CD4-positive, alpha-beta T cell (primary cell): ENCODE measurements at regions of chr22 and their contacts with region 1.

Region 1: GRCh38 chr22:38201710-38202436 is at the start of gene MAFF:
- DNase-seq: peak; percentile 65 to 96 (median 80)
- ATAC-seq: peak; percentile 74
- H3K4me3 ChIP-seq: peak within 1 kb of the TSS; percentile 83
- H3K4me3 Mint-ChIP-seq: peak within 1 kb of the TSS; percentile 90
- H3K27ac ChIP-seq: peak within 1 kb of the TSS; percentile 82
- H3K27ac Mint-ChIP-seq: peak within 1 kb of the TSS; percentile 87
- H3K4me1 ChIP-seq: peaks cover 37% of the 10 kb centered on the region
- H3K4me1 Mint-ChIP-seq: peaks cover 26% of the 10 kb centered on the region
- H3K27me3 ChIP-seq: no peaks in the 10 kb centered on the region
- H3K27me3 Mint-ChIP-seq: no peaks in the 10 kb centered on the region
- CTCF ChIP-seq: no peak
- total RNA-seq, gene MAFF: 25.6 to 27.3 TPM

Region 2: GRCh38 chr22:38214256-38215056 is 12.6 kb after region 1 on chr22:
- CTCF ChIA-PET with region 1: no interaction called
- POLR2A ChIA-PET with region 1: interaction called, 24 read pairs
- intact Hi-C with region 1: no loop called
- DNase-seq: peak; percentile 51 to 90 (median 72)
- ATAC-seq: peak; percentile 82
- H3K4me3 ChIP-seq: peak overlapping the region; percentile 51
- H3K4me3 Mint-ChIP-seq: peak overlapping the region; percentile 45
- H3K27ac ChIP-seq: no peak overlapping the region
- H3K27ac Mint-ChIP-seq: peak overlapping the region; percentile 55
- H3K4me1 ChIP-seq: peaks cover 34% of the 10 kb centered on the region
- H3K4me1 Mint-ChIP-seq: peaks cover 29% of the 10 kb centered on the region
- H3K27me3 ChIP-seq: no peaks in the 10 kb centered on the region
- H3K27me3 Mint-ChIP-seq: no peaks in the 10 kb centered on the region
- CTCF ChIP-seq: no peak

Region 3: GRCh38 chr22:38262051-38262795 is 60.4 kb after region 1 on chr22:
- CTCF ChIA-PET with region 1: no interaction called
- POLR2A ChIA-PET with region 1: interaction called, 5 read pairs
- intact Hi-C with region 1: loop called in 1 of 2 experiments (anchors 10 kb)
- DNase-seq: peak; percentile 17 to 65 (median 33)
- ATAC-seq: no peak
- H3K4me3 ChIP-seq: no peak overlapping the region
- H3K4me3 Mint-ChIP-seq: no peak overlapping the region
- H3K27ac ChIP-seq: no peak overlapping the region
- H3K27ac Mint-ChIP-seq: peak overlapping the region; percentile 51
- H3K4me1 ChIP-seq: peaks cover 58% of the 10 kb centered on the region
- H3K4me1 Mint-ChIP-seq: peaks cover 61% of the 10 kb centered on the region
- H3K27me3 ChIP-seq: no peaks in the 10 kb centered on the region
- H3K27me3 Mint-ChIP-seq: no peaks in the 10 kb centered on the region
- CTCF ChIP-seq: peak; percentile 48

Region 4: GRCh38 chr22:38272373-38273134 is 70.7 kb after region 1 on chr22 and contains the start of gene TMEM184B:
- CTCF ChIA-PET with region 1: no interaction called
- POLR2A ChIA-PET with region 1: interaction called, 5 read pairs
- intact Hi-C with region 1: loop called (anchors 5 to 10 kb)
- DNase-seq: peak; percentile 65 to 95 (median 80)
- ATAC-seq: peak; percentile 93
- H3K4me3 ChIP-seq: peak within 1 kb of the TSS; percentile 89
- H3K4me3 Mint-ChIP-seq: peak within 1 kb of the TSS; percentile 95
- H3K27ac ChIP-seq: peak within 1 kb of the TSS; percentile 77 to 90
- H3K27ac Mint-ChIP-seq: peak within 1 kb of the TSS; percentile 95
- H3K4me1 ChIP-seq: peaks cover 50% of the 10 kb centered on the region
- H3K4me1 Mint-ChIP-seq: peaks cover 55% of the 10 kb centered on the region
- H3K27me3 ChIP-seq: no peaks in the 10 kb centered on the region
- H3K27me3 Mint-ChIP-seq: no peaks in the 10 kb centered on the region
- CTCF ChIP-seq: no peak
- total RNA-seq, gene TMEM184B: 49.3 to 50.1 TPM